Activated CD4-positive, alpha-beta T cell treated with anti-CD3 and anti-CD28 coated beads, Interleukin-2, amount 10 ng/mL, durations not matched to agents 24 days and 14 days (primary cell): ENCODE measurements at regions of chr20 and their contacts with region 1.

Region 1: DNA sequence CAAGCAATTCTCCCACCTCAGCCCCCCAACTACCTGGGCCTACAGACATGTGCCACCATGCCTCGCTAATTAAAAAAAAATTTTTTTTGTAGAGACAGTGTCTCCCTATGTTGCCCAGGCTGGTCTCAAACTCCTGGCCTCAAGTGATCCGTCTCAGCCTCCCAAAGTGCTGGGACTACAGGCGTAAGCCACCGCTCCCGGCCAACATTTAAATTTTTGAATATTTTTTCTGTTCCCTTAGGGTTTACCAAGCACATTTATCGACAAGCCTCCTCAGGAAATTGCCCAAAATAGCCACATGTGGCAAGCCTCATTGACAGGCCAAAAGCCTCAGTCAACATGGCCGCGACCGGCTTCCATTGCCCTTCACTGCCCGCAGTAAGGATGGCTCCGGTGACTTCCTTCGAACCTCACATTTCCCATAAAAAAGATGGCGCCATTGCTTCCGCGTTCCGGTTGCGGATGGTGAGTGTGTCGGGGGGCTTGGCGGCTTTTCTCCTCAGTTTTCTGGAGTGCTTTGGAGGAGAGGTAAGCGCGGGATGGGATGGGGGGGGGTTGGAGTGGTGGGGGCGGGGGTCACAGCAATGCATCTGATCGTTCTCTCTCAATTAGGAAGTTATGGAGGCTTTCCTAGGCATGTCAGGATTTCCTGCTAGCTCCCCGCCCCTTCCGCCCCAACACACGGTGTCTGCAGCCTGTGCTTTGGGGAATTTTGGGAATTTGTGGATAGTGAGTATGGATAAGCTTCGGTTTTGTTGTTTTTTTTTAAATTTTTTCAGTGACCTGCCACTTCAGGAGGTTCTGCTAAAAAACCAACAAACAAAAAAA is at the start of gene SHLD1:
- DNase-seq: peak; percentile 94
- H3K4me3 Mint-ChIP-seq: peak within 1 kb of the TSS; percentile 98
- H3K27ac Mint-ChIP-seq: peak within 1 kb of the TSS; percentile 98
- H3K4me1 Mint-ChIP-seq: peaks cover 14% of the 10 kb centered on the region
- H3K27me3 Mint-ChIP-seq: no peaks in the 10 kb centered on the region
- total RNA-seq, gene SHLD1: 8.6 and 10.7 TPM in 2 replicates

Region 2: DNA sequence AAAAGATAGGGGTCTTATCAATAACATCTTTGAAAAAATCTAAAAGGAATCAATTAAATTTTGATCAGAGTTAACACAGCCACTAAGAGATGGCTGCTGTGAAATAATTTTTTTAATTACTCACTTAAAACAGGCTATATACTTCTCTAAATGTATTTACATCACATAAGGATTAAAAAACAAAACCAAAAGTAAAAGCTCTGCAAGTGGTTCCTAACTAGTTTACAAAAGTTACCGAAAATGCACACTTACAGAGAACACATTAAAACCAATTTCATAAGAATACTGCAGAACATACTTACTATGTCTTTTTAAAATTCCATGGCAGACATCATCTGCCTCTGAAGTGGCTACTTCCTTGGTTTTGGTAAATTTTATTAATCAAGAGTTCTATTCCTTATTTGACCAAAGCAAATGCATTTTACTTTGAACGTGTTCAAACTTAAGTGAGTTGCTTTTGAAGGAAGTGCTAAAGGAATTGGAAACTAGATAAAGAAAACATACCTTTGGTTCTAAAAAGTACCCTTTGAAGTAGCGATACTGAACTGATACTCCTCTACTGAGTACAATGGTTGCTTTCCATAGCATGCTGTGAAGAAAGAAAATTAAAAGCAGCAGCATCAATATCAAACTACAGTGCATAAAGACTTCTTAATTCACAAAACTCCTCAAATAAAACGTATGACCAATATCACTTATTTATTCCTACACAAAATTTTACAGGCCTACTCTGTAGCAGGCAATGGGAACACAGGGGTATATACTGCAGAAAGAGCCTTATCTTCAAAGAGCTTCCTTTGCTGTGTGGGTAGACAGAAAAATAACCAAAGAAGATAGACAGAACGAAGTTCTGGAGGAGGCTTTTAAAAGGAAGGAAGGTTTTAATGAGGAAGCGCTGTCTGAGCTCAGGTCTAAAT is 157.1 kb before region 1 on chr20:
- intact Hi-C with region 1: loop called (anchors 5 kb)
- DNase-seq: no peak
- H3K4me3 Mint-ChIP-seq: peak overlapping the region; percentile 85
- H3K27ac Mint-ChIP-seq: peak overlapping the region; percentile 94
- H3K4me1 Mint-ChIP-seq: peaks cover 58% of the 10 kb centered on the region
- H3K27me3 Mint-ChIP-seq: no peaks in the 10 kb centered on the region

Region 3: DNA sequence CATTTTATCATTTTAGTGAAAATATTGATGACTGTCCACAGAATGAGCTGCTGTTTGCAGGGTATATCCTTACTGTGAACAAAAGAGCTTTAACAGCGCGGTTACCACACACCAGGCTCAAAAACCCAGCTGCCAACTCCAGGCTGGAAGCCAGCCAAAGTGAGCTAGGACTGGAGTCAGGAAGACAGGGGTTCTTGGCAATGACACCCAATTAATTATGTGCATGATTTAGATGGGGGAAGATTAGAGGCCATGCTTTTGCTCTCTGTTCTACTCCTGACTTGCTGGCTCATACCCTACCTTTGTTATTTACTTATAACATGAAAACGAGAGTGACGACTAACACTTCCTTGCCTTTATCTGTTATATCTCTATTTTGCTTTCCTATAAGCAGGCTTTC is 128.9 kb before region 1 on chr20:
- intact Hi-C with region 1: no loop called
- DNase-seq: no peak
- H3K4me3 Mint-ChIP-seq: no peak overlapping the region
- H3K27ac Mint-ChIP-seq: no peak overlapping the region
- H3K4me1 Mint-ChIP-seq: peaks cover 2% of the 10 kb centered on the region
- H3K27me3 Mint-ChIP-seq: no peaks in the 10 kb centered on the region

Region 4: GRCh38 chr20:5714261-5715041 is 35.7 kb before region 1 on chr20:
- intact Hi-C with region 1: loop called (anchors 1 kb)
- DNase-seq: peak; percentile 90
- H3K4me3 Mint-ChIP-seq: peak overlapping the region; percentile 8
- H3K27ac Mint-ChIP-seq: peak overlapping the region; percentile 80
- H3K4me1 Mint-ChIP-seq: peaks cover 18% of the 10 kb centered on the region
- H3K27me3 Mint-ChIP-seq: peaks cover 2% of the 10 kb centered on the region